Panc1 (cell line): ENCODE measurements at regions of chr3 and their contacts with region 1.

Region 1: DNA sequence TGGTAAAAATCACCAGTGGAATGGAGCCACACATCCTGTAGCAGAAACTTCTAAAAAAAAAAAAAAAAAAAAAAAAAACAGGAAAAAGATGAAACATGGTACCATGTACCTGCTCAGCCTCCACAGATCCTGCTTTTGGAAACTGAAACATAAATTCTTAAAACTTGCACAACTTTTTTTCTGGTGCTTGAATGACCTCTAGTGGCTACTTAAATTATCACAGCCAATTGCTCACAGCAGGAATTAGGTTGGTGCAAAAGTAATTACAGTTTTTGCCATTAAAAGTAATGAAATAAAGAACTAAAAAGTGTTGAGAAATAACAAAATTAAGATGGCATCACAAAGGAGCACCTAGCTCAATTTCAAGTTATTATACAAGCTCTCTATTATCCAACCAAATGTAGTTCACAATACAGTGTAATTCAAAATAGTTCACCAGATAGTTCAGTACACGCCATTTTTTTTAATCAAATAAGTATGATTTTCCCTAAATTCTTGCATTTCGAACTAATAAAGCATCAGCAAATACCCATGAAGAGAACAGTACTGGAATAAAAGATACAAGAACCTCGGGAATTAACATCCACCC is 80.6 kb downstream of the ULK4 start:
- DNase-seq: peak; percentile 10
- ATAC-seq: no peak
- H3K4me3 ChIP-seq: no peak overlapping the region
- H3K27ac ChIP-seq: no peak overlapping the region
- H3K4me1 ChIP-seq: no peaks in the 10 kb centered on the region
- H3K27me3 ChIP-seq: no peaks in the 10 kb centered on the region
- CTCF ChIP-seq: peak; percentile 60; the same call in 1 of the 2 replicates

Region 2: DNA sequence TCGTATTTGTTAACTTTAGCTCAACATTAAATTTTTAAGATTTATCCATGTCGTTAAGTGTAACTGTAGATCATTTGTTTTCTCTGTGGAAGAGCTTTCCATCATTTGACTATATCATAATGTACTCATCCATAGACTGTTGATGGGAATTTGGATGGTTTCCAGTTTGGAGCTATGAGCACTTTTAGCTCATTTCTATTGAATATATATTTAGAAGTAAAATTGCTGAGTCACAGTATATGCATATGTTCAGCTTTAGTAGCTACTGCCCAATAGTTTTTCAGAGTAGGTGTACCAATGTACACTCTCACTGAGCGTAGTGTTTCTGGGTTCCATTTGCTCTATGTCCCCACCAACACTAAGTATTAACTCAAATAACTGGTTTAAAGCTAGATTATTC is 182.4 kb before region 1 on chr3:
- CTCF ChIA-PET with region 1: no interaction called
- POLR2A ChIA-PET with region 1: no interaction called
- in situ Hi-C with region 1: no loop called
- intact Hi-C with region 1: loop called (anchors 5 kb)
- DNase-seq: no peak
- ATAC-seq: no peak
- H3K4me3 ChIP-seq: no peak overlapping the region
- H3K27ac ChIP-seq: no peak overlapping the region
- H3K4me1 ChIP-seq: no peaks in the 10 kb centered on the region
- H3K27me3 ChIP-seq: no peaks in the 10 kb centered on the region
- CTCF ChIP-seq: no peak

Region 3: DNA sequence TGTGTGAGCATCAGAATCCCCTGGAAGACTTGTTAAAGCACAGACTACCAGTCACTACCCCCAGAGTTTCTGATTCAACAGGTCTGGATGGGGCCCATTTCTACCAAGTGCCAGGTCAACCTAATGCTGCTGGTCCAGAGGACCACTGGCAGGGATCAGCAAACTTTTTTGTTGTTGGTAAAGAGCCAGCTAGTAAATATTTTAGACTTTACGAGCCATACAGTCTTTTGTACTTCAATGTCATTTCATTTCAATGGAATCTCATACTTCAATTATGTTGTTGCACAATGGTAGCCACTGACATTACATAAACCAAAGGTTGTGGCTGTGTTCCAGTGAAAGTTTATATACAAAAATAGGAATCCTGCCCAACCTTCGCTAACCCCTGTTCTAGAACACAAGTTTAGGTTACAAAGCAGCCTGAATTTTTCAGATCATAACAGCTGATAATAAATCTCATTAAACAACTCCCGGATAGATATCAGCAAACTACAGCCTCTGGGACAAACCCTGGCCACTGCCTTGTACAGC is 51.9 kb after region 1 on chr3:
- CTCF ChIA-PET with region 1: no interaction called
- POLR2A ChIA-PET with region 1: no interaction called
- in situ Hi-C with region 1: no loop called
- intact Hi-C with region 1: no loop called
- DNase-seq: no peak
- ATAC-seq: peak; percentile 84
- H3K4me3 ChIP-seq: no peak overlapping the region
- H3K27ac ChIP-seq: peak overlapping the region; percentile 76
- H3K4me1 ChIP-seq: peaks cover 10% of the 10 kb centered on the region
- H3K27me3 ChIP-seq: no peaks in the 10 kb centered on the region
- CTCF ChIP-seq: no peak

Region 4: DNA sequence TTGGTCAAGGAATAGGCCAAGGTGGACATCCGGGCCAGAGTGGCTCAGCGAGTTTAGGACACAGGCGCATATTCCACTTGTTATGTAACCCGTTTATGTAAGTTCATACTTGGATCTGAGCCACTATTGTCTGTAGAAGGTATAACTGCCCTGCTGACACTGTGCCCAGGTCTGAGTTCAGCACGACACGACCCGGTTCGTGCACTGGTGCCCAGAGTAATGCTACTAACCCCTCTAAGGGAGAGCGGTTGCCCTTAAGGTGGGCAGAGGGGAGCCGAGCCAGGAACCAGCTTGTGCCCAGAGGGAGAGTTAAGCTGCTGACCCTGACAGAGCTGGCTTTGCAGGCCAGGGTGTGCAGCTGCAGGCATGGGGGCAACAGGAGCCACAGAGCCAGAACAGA is 82.5 kb after region 1 on chr3:
- CTCF ChIA-PET with region 1: no interaction called
- POLR2A ChIA-PET with region 1: no interaction called
- in situ Hi-C with region 1: no loop called
- intact Hi-C with region 1: no loop called
- DNase-seq: no peak
- ATAC-seq: no peak
- H3K4me3 ChIP-seq: no peak overlapping the region
- H3K27ac ChIP-seq: no peak overlapping the region
- H3K4me1 ChIP-seq: peaks cover 5% of the 10 kb centered on the region; the same call in 1 of the 2 replicates
- H3K27me3 ChIP-seq: no peaks in the 10 kb centered on the region
- CTCF ChIP-seq: no peak

Region 5: DNA sequence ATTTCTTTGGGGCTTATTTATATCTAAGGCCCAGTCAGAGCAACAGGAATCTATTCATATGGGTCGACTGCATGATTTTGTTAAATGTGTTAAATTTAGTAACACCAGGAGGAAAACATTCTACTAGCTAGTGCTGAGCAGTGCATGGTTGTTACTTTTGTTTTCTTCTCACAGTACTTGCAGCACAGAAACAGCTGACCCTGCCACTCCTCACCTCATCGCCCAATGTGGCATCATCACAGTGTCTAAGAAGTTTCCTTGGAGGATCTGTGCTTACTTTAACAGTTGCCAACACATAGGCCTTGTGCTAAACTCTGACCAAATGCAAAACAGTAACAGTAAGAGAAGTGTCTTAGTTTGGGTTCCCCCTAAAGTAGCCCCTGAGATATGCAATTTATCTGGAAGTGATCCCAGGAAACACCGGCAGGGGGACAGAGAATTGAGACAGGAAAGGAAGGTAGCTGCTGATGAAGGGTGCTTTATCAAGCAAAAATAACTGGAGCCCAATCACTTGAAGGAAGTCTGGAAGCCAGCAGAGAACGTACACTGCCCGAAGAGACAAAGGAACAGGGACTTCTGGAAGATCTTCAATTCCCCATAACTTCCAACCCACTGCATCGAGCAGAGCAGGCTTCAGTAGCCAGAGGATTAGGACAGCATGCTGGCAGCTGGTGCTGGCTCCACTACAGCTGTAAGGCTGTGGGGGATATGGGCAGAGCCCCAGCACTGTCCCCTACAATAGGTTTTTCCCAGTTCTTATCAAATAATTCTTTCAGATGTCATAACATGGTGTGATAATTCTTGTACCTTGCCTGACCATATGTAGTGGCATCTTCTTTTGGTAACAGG is 116.6 kb after region 1 on chr3:
- CTCF ChIA-PET with region 1: no interaction called
- POLR2A ChIA-PET with region 1: no interaction called
- in situ Hi-C with region 1: no loop called
- intact Hi-C with region 1: no loop called
- DNase-seq: no peak
- ATAC-seq: no peak
- H3K4me3 ChIP-seq: no peak overlapping the region
- H3K27ac ChIP-seq: no peak overlapping the region
- H3K4me1 ChIP-seq: no peaks in the 10 kb centered on the region
- H3K27me3 ChIP-seq: no peaks in the 10 kb centered on the region
- CTCF ChIP-seq: no peak